Gastrocnemius medialis (tissue), 4 donors: ENCODE measurements at regions of chr9 and their contacts with region 1.

Region 1: DNA sequence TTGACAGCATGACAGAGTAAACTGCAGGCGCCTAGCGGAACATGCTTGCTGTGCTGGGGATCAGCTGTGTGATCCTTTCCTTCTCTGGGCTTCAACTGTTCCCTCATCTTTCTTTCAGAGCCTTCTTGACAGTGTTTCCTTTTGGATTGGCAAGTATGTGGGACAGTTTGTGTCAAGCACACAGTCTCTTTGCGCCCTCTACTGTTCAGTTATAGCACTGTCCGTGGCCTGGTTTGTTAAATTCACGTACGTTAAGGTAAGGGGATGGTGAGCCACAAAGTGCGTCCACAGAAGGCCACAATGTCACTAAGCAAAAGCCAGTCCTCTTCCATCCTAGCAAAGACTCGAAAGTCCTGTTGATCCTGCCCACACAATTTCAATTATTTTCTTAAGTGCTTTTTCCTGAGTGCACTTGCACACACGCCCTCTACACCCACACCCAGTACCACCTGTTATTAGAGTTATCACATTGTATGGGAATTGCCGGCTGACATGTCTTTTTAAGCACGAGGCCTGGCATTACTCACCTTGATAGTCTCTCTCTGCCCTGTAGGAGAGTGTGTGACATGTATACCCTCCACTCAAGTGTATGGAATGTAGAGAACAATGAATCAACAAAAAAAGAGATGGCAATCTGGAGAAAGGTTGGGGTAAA is 22.5 kb upstream of the PTPN3 start:
- DNase-seq: peak in 1 of 2 donors; percentile 66
- ATAC-seq: peak; percentile 90 to 99
- H3K4me3 ChIP-seq: no peak overlapping the region
- H3K27ac ChIP-seq: no peak overlapping the region
- H3K4me1 ChIP-seq: no peaks in the 10 kb centered on the region
- H3K27me3 ChIP-seq: no peaks in the 10 kb centered on the region
- CTCF ChIP-seq: peak; percentile 82 to 92 (median 89)
- POLR2A ChIP-seq: no peak

Region 2: GRCh38 chr9:109244157-109245132 is 276.2 kb before region 1 on chr9:
- in situ Hi-C with region 1: no loop called
- intact Hi-C with region 1: loop called (anchors 10 kb)
- DNase-seq: peak; percentile 23 to 64
- ATAC-seq: peak; percentile 65 to 89
- H3K4me3 ChIP-seq: no peak overlapping the region
- H3K27ac ChIP-seq: peak overlapping the region in 3 of 4 donors; percentile 18 to 72 (median 38)
- H3K4me1 ChIP-seq: peaks cover 0 to 11% of the 10 kb centered on the region in 2 donors
- H3K27me3 ChIP-seq: no peaks in the 10 kb centered on the region
- CTCF ChIP-seq: peak; percentile 73 to 94 (median 89)
- POLR2A ChIP-seq: no peak

Region 3: DNA sequence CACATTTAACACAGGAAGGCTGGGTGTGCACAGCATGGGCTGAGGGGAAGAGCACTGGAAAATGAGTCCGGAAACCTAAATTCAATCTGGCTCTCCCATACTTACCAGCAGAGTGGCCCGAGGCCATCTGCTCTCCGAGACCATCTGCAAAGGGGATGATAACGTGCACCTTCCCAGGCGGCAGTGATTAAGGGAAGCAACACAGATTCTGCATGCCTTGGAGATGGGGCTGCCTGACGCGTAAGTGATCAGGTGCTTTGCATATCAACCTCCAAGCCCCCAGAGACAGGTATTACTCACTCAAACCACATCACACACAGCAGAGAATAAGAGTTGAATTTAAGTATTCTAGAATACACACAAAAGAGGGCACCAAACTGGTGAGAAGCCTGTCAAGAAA is 208.9 kb before region 1 on chr9:
- in situ Hi-C with region 1: no loop called
- intact Hi-C with region 1: loop called (anchors 5 kb)
- DNase-seq: no peak
- ATAC-seq: no peak
- H3K4me3 ChIP-seq: no peak overlapping the region
- H3K27ac ChIP-seq: peak overlapping the region in 1 of 4 donors; percentile 47
- H3K4me1 ChIP-seq: peaks cover 14 to 24% of the 10 kb centered on the region in 2 donors
- H3K27me3 ChIP-seq: peaks cover 0 to 3% (median 0%) of the 10 kb centered on the region in 3 donors
- CTCF ChIP-seq: no peak
- POLR2A ChIP-seq: no peak

Region 4: DNA sequence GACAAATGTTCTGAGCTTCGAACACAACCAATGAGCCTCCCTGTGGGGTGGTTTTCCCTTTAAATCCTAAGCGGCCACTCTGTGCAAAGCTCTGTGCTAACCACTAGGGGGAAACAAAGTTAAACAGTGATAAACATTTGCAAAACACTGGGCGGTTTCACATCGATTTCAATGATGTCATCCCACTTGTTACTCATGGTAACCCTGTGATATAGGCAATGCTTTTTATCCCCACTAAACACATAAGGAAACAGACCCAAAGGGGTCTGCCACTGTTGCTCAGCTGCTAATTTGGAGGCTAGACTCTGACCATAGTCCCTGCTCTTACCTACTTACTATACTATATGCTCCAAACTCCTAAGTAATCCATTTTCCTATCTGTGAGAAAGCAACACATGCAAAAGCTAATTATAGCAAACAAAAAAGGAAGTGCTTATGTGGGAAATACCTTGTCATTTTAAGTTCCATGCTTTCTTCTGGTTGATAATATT is 79.8 kb before region 1 on chr9:
- in situ Hi-C with region 1: loop called in 2 of 4 experiments (anchors 5 kb)
- intact Hi-C with region 1: loop called (anchors 1 kb)
- DNase-seq: no peak
- ATAC-seq: peak; percentile 67 to 68
- H3K4me3 ChIP-seq: no peak overlapping the region
- H3K27ac ChIP-seq: peak overlapping the region; percentile 36 to 61 (median 50)
- H3K4me1 ChIP-seq: peaks cover 23 to 34% of the 10 kb centered on the region in 2 donors
- H3K27me3 ChIP-seq: no peaks in the 10 kb centered on the region
- CTCF ChIP-seq: peak; percentile 74 to 86 (median 82)
- POLR2A ChIP-seq: no peak